ENCODE measurements at regions of chr10 and their contacts with region 1.

Region 1: GRCh38 chr10:86399879-86400704 is 33.5 kb upstream of the GRID1 start:
- DNase-seq: peak; percentile 87 to 97 (median 94)
- ATAC-seq: peak; percentile 78
- H3K4me3 ChIP-seq: peak overlapping the region; percentile 69 to 89
- H3K4me3 Mint-ChIP-seq: peak overlapping the region; percentile 91
- H3K27ac ChIP-seq: peak overlapping the region; percentile 56 to 66
- H3K27ac Mint-ChIP-seq: peak overlapping the region; percentile 90
- H3K4me1 ChIP-seq: peaks cover 13% of the 10 kb centered on the region
- H3K4me1 Mint-ChIP-seq: peaks cover 23% of the 10 kb centered on the region
- H3K27me3 ChIP-seq: peaks cover 0 to 2% of the 10 kb centered on the region in 2 experiments
- H3K27me3 Mint-ChIP-seq: no peaks in the 10 kb centered on the region
- CTCF ChIP-seq: peak; percentile 92

Region 2: GRCh38 chr10:86090807-86091206 is 309.3 kb before region 1 on chr10:
- CTCF ChIA-PET with region 1: no interaction called
- POLR2A ChIA-PET with region 1: no interaction called
- intact Hi-C with region 1: no loop called
- DNase-seq: no peak
- ATAC-seq: no peak
- H3K4me3 ChIP-seq: no peak overlapping the region
- H3K4me3 Mint-ChIP-seq: no peak overlapping the region
- H3K27ac ChIP-seq: no peak overlapping the region
- H3K27ac Mint-ChIP-seq: no peak overlapping the region
- H3K4me1 ChIP-seq: no peaks in the 10 kb centered on the region
- H3K4me1 Mint-ChIP-seq: no peaks in the 10 kb centered on the region
- H3K27me3 ChIP-seq: no peaks in the 10 kb centered on the region
- H3K27me3 Mint-ChIP-seq: peaks cover 19% of the 10 kb centered on the region
- CTCF ChIP-seq: no peak

Region 3: DNA sequence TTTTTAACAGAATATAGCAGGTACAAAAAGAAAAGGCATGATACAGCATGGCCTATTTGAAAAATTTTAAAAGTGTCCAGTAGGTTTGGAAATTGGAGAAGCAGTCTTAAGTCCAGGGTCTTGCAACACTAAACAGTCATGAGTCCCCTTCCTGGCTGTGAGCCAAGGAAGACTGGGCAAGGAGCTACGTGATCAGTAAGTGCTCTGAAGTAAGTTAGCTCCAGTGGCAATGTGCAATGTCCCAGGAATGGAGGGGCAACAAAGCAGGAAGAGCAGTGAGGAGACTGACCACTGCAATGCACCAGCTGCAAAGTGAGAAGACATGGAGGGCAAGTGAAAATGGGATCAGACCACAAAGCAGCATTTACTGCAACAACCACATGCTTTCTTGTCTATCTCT is 39.5 kb after region 1 on chr10:
- CTCF ChIA-PET with region 1: interaction called, 27 read pairs
- POLR2A ChIA-PET with region 1: no interaction called
- intact Hi-C with region 1: loop called (anchors 2 to 5 kb)
- DNase-seq: peak in 2 of 9 experiments; percentile 6 to 38
- ATAC-seq: no peak
- H3K4me3 ChIP-seq: no peak overlapping the region
- H3K4me3 Mint-ChIP-seq: no peak overlapping the region
- H3K27ac ChIP-seq: no peak overlapping the region
- H3K27ac Mint-ChIP-seq: peak overlapping the region; percentile 69
- H3K4me1 ChIP-seq: peaks cover 7% of the 10 kb centered on the region
- H3K4me1 Mint-ChIP-seq: peaks cover 24% of the 10 kb centered on the region
- H3K27me3 ChIP-seq: no peaks in the 10 kb centered on the region
- H3K27me3 Mint-ChIP-seq: no peaks in the 10 kb centered on the region
- CTCF ChIP-seq: no peak

Region 4: GRCh38 chr10:86585037-86585725 is 185.1 kb after region 1 on chr10:
- CTCF ChIA-PET with region 1: interaction called, 118 read pairs
- POLR2A ChIA-PET with region 1: interaction called, 21 read pairs
- intact Hi-C with region 1: loop called (anchors 1 kb)
- DNase-seq: peak; percentile 43 to 86 (median 73)
- ATAC-seq: peak; percentile 98
- H3K4me3 ChIP-seq: no peak overlapping the region
- H3K4me3 Mint-ChIP-seq: no peak overlapping the region
- H3K27ac ChIP-seq: no peak overlapping the region
- H3K27ac Mint-ChIP-seq: no peak overlapping the region
- H3K4me1 ChIP-seq: peaks cover 6% of the 10 kb centered on the region
- H3K4me1 Mint-ChIP-seq: peaks cover 3% of the 10 kb centered on the region
- H3K27me3 ChIP-seq: no peaks in the 10 kb centered on the region
- H3K27me3 Mint-ChIP-seq: peaks cover 4% of the 10 kb centered on the region
- CTCF ChIP-seq: peak; percentile 93

Region 5: GRCh38 chr10:86755740-86756510 is 355.8 kb after region 1 on chr10:
- CTCF ChIA-PET with region 1: no interaction called
- POLR2A ChIA-PET with region 1: no interaction called
- intact Hi-C with region 1: loop called in 1 of 2 experiments (anchors 5 kb)
- DNase-seq: peak; percentile 66 to 92 (median 85)
- ATAC-seq: peak; percentile 92
- H3K4me3 ChIP-seq: peak overlapping the region; percentile 72 to 77
- H3K4me3 Mint-ChIP-seq: peak overlapping the region; percentile 86
- H3K27ac ChIP-seq: peak overlapping the region in 1 of 2 experiments; percentile 45
- H3K27ac Mint-ChIP-seq: no peak overlapping the region
- H3K4me1 ChIP-seq: peaks cover 15% of the 10 kb centered on the region
- H3K4me1 Mint-ChIP-seq: peaks cover 31% of the 10 kb centered on the region
- H3K27me3 ChIP-seq: peaks cover 0 to 4% of the 10 kb centered on the region in 2 experiments
- H3K27me3 Mint-ChIP-seq: peaks cover 17% of the 10 kb centered on the region
- CTCF ChIP-seq: no peak

Measured in CD8-positive, alpha-beta T cell (primary cell).